ENCODE measurements at regions of chr1 and their contacts with region 1.

Region 1: GRCh38 chr1:185458670-185459069 is 141.6 kb upstream of the IVNS1ABP start:
- DNase-seq: no peak
- H3K4me3 ChIP-seq: no peak overlapping the region
- H3K27ac ChIP-seq: no peak overlapping the region
- H3K4me1 ChIP-seq: no peaks in the 10 kb centered on the region
- H3K27me3 ChIP-seq: no peaks in the 10 kb centered on the region
- CTCF ChIP-seq: no peak

Region 2: DNA sequence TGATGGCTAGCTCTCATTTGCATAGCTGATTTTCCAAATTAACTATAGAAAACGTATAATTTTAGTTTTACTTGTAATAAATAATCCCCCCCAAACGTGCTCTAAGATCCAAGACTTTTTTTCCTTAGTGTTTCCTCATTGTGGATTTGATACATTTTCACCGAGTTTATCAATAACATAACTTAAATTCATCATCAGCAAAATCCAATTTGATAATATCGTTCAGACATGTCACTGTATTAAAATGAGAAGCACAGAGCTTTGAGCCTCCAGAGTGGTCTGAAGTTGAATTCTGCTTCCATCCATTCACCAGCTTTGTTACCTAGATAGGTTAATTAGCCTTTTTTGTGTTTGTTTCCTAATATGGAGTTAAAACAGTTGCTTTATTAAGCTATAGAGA is 193.4 kb before region 1 on chr1:
- CTCF ChIA-PET with region 1: no interaction called
- POLR2A ChIA-PET with region 1: interaction called, 10 read pairs
- intact Hi-C with region 1: no loop called
- DNase-seq: no peak
- H3K4me3 ChIP-seq: no peak overlapping the region
- H3K27ac ChIP-seq: no peak overlapping the region
- H3K4me1 ChIP-seq: no peaks in the 10 kb centered on the region
- H3K27me3 ChIP-seq: no peaks in the 10 kb centered on the region
- CTCF ChIP-seq: no peak

Measured in PC-9 (cell line).